Activated CD4-positive, alpha-beta memory T cell treated with anti-CD3 and anti-CD28 coated beads for 36 hours (primary cell): ENCODE measurements at regions of chr7 and their contacts with region 1.

Region 1: DNA sequence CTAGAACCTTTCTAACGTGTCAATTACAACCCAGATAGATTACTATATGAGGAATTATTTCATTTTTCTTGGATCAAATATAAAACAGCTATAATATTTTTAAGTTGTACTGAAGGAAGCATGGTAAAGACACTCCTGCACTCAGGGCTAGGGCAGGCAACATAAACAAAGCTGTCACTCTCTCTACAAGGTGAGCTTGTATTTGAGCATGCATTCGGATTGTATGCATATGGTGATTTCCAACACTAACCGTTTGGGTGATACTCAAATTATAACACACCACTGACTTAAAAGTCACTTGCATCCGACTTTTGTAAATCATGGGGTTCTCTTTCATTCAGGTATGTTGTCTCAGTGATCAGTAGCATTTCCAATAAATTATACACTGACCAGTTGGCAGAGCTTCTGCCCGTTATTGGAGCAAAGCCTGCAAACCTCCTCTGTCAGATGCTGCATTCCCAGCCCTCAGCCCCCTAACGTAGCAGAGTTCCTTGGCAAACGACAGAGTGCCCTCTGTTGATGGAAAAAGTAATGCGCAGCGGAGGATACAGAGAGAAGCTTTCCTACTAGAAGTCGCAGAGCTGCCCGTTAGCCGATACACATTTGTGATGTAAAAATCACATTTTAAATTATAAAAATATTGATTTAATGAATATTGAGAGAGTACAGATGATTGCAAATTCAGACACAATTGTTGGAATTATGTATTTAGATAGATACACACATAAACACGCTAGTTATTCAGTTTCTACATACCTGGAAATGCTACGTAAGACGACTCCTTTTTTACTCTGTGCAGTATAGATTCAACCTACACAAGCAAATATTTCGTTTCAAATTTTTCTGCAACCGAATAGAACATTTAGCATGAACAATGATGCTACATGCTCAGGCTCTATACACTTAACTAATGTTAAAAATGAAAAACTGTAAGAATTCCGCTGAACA is 173.9 kb upstream of the SP4 start:
- DNase-seq: peak; percentile 56
- H3K4me3 Mint-ChIP-seq: no peak overlapping the region
- H3K27ac Mint-ChIP-seq: no peak overlapping the region
- H3K4me1 Mint-ChIP-seq: peaks cover 1% of the 10 kb centered on the region
- H3K27me3 Mint-ChIP-seq: peaks cover 51% of the 10 kb centered on the region

Region 2: DNA sequence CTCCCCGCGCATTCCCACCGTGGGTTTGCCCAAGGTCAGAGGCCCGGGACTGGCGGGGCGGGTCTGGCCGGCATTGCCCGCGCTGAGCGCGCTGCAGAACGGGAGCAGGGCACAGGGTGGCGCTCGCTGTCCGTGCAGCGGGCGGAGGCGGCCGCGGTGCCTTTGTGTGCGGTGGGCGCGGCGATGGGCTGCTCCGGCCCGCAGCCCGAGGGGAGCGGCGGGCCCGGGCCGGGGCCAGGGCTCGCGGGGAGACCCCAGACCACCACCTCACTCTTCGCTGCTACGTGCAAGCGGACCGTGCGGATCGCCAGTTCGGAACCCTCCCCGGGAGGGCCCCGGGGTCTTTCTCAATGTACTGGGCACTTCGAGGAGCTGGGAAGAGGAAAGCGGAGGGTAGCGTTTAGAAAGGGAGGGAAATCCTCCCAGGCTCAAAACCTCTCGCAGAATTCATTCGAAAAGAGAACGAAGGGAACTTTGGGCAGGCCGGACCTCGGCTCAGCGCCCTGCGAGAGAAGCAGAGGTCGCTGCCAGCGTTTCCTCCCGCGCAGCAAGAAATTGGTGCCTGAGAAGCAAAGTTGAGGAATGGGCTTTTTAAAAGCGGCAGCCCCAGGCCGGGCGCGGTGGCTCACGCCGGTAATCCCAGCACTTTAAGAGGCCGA is 475.8 kb before region 1 on chr7:
- CTCF ChIA-PET with region 1: interaction called, 3 read pairs
- POLR2A ChIA-PET with region 1: no interaction called
- intact Hi-C with region 1: loop called (anchors 1 kb)
- DNase-seq: no peak
- H3K4me3 Mint-ChIP-seq: no peak overlapping the region
- H3K27ac Mint-ChIP-seq: no peak overlapping the region
- H3K4me1 Mint-ChIP-seq: peaks cover 11% of the 10 kb centered on the region
- H3K27me3 Mint-ChIP-seq: peaks cover 68% of the 10 kb centered on the region

Region 3: DNA sequence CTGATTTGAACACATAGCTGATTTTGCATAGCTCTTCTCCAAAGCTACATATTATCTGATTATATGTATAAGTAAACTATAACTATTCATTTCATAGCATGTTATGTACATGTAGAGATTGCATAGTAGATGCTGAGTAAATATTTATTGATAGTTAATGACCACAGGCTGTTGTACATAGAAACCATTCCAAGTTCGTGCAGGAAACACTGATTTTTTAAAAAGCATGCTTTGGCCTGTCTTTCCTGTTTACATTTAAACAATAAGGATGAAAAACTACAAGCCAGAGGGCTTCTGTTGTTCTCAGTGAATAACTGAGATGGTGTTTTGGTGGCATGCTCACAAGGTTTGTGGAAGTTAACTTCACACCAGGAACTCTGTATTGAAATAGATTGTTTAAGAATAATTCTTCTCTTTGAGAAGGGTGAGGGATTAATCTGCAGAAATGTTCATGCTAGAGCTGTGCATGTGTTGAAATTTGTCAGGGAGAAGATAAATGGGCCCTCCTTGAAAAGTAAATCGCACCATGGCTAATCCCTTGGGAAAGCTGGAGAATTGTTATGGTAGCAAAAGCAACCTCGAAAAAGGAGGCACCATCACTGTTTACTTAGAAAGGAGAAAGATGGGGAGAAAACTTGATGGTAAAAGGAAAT is 347.1 kb before region 1 on chr7:
- CTCF ChIA-PET with region 1: no interaction called
- POLR2A ChIA-PET with region 1: no interaction called
- intact Hi-C with region 1: no loop called
- DNase-seq: no peak
- H3K4me3 Mint-ChIP-seq: no peak overlapping the region
- H3K27ac Mint-ChIP-seq: no peak overlapping the region
- H3K4me1 Mint-ChIP-seq: no peaks in the 10 kb centered on the region
- H3K27me3 Mint-ChIP-seq: no peaks in the 10 kb centered on the region

Region 4: GRCh38 chr7:21317966-21318915 is 64.2 kb after region 1 on chr7:
- CTCF ChIA-PET with region 1: no interaction called
- POLR2A ChIA-PET with region 1: no interaction called
- intact Hi-C with region 1: no loop called
- DNase-seq: no peak
- H3K4me3 Mint-ChIP-seq: no peak overlapping the region
- H3K27ac Mint-ChIP-seq: no peak overlapping the region
- H3K4me1 Mint-ChIP-seq: no peaks in the 10 kb centered on the region
- H3K27me3 Mint-ChIP-seq: no peaks in the 10 kb centered on the region

Region 5: DNA sequence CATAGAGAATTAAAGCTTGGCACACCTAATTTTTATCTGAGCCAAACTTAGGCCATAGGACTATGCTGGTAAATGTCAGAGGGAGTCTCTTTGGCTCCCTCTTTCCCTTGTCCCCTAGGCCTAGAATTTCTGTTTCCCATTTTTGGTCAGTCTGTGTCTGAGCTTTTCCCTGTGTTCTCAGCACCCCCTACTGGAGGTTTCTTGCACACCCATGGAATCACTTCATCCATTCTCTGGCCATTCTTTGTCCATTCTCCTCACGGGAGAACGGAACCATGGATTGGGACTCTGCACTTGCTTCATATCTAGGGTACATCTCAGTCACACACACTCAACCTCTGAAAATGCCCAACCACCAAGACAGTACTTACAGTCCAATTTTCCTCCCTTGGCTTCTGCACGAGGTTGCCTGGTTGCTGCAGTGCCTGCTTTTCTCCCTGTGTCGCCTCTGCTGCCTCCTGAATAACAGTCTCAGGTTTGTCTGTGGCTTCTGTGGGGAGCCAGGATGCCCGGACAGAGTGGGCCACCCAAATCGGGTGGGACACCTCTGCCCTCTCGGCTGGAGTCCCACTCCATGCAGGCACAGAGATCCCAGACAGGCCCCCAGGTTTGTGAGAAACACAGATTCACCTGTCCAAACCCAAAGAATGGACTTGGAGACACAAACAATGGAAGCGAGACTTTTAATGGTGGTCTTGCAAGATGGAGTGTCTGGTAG is 253.8 kb after region 1 on chr7:
- CTCF ChIA-PET with region 1: interaction called, 13 read pairs
- POLR2A ChIA-PET with region 1: no interaction called
- intact Hi-C with region 1: loop called (anchors 1 kb)
- DNase-seq: peak; percentile 29
- H3K4me3 Mint-ChIP-seq: no peak overlapping the region
- H3K27ac Mint-ChIP-seq: no peak overlapping the region
- H3K4me1 Mint-ChIP-seq: no peaks in the 10 kb centered on the region
- H3K27me3 Mint-ChIP-seq: no peaks in the 10 kb centered on the region

Region 6: GRCh38 chr7:21526007-21526406 is 272.0 kb after region 1 on chr7:
- CTCF ChIA-PET with region 1: interaction called, 3 read pairs
- POLR2A ChIA-PET with region 1: no interaction called
- intact Hi-C with region 1: loop called (anchors 5 kb)
- DNase-seq: no peak
- H3K4me3 Mint-ChIP-seq: no peak overlapping the region
- H3K27ac Mint-ChIP-seq: no peak overlapping the region
- H3K4me1 Mint-ChIP-seq: no peaks in the 10 kb centered on the region
- H3K27me3 Mint-ChIP-seq: no peaks in the 10 kb centered on the region